ENCODE measurements at regions of chr1 and their contacts with region 1.

Region 1: GRCh38 chr1:39189592-39190041 is 14.9 kb upstream of the MACF1 start:
- DNase-seq: no peak
- H3K4me3 Mint-ChIP-seq: no peak overlapping the region
- H3K27ac Mint-ChIP-seq: peak overlapping the region; percentile 50
- H3K4me1 Mint-ChIP-seq: peaks cover 84% of the 10 kb centered on the region
- H3K27me3 Mint-ChIP-seq: no peaks in the 10 kb centered on the region

Region 2: DNA sequence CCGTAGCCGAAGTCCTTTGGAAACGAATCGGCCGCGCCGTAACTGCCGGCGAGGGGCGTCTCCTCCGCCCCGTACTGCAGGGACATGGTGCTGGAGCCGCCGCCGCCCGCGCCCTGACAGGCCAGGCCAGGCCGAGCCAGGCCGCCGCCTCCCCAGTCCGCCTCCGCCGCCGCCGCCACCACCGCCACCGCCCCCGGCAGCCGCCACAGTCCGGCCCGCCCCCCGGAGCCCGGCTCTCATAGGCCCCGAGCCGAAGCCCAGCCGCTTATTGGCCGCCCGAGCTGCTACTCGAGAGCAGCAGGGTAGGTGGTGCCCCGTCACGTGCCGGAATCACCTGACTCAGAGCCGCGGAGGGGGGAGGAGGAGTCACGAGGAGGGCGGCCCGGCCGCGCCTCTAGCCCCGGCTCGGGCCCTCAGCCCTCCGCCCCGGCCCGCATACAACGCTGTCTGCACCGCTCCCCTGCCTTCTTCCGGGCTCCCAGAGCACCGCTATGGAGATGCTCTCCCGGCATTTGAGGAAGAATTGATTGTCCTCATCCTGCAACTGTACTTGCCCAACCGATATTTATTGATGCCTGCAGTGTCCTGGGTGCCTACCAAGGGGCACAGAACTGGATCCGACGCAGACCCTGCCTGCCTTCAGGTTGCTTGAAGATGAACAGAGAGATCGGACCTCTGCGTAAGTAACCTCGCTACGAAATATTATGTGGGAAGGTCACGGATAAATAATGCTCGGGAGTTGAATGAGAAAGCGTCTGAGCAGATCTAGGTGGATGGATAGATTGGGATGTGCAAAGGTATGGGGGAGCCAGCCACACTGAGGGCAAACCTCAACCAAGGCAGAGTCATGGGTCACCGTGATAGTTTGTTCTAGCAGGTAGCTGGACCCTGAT is 329.8 kb before region 1 on chr1 and contains the start of gene RRAGC:
- CTCF ChIA-PET with region 1: no interaction called
- POLR2A ChIA-PET with region 1: no interaction called
- intact Hi-C with region 1: loop called (anchors 5 kb)
- DNase-seq: peak; percentile 99
- H3K4me3 Mint-ChIP-seq: peak within 1 kb of the TSS; percentile 99
- H3K27ac Mint-ChIP-seq: peak within 1 kb of the TSS; percentile 95
- H3K4me1 Mint-ChIP-seq: peaks cover 71% of the 10 kb centered on the region
- H3K27me3 Mint-ChIP-seq: no peaks in the 10 kb centered on the region
- total RNA-seq, gene RRAGC: 27.6 to 29.7 TPM

Region 3: GRCh38 chr1:39098546-39099250 is 90.9 kb before region 1 on chr1:
- CTCF ChIA-PET with region 1: interaction called, 58 read pairs
- POLR2A ChIA-PET with region 1: interaction called, 4 read pairs
- intact Hi-C with region 1: loop called (anchors 1 kb)
- DNase-seq: peak; percentile 76
- H3K4me3 Mint-ChIP-seq: no peak overlapping the region
- H3K27ac Mint-ChIP-seq: peak overlapping the region; percentile 46
- H3K4me1 Mint-ChIP-seq: peaks cover 22% of the 10 kb centered on the region
- H3K27me3 Mint-ChIP-seq: no peaks in the 10 kb centered on the region

Region 4: DNA sequence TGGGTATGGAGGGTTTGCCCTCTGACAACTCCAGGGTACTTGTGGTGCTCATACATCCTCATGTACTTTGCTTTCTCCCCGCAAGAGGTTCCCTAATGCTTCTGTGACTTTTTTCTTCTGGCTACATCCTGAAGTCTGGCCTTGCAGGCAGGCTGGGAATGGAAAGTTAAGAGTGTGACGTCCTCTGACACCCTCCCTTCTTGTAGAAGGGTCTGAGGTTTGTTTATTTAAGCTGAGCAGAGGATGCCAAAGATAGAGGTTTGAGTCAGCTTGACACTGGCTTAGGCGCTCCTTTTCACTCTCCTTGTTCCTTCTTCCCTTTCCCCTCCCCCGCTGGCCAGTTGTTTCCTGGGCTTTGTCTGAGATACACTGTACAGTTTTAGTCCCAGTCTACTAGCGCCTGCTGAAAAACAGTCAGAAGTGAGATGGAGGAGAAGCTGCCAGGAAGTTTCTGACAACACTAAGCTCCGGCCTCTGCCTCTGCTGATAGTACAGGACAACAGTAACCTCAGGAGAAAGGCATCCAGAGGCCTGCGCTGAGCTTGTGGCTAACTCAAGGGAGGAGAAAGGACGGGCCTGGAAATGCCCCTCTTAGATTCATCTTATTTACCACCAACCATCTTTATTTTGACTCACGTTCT is 14.9 kb after region 1 on chr1 and contains the start of gene MACF1:
- CTCF ChIA-PET with region 1: interaction called, 151 read pairs
- POLR2A ChIA-PET with region 1: interaction called, 129 read pairs
- intact Hi-C with region 1: loop called (anchors 1 kb)
- DNase-seq: peak; percentile 72
- H3K4me3 Mint-ChIP-seq: peak within 1 kb of the TSS; percentile 81
- H3K27ac Mint-ChIP-seq: peak within 1 kb of the TSS; percentile 96
- H3K4me1 Mint-ChIP-seq: peaks cover 48% of the 10 kb centered on the region
- H3K27me3 Mint-ChIP-seq: no peaks in the 10 kb centered on the region
- total RNA-seq, gene MACF1: 239 to 240 TPM

Region 5: DNA sequence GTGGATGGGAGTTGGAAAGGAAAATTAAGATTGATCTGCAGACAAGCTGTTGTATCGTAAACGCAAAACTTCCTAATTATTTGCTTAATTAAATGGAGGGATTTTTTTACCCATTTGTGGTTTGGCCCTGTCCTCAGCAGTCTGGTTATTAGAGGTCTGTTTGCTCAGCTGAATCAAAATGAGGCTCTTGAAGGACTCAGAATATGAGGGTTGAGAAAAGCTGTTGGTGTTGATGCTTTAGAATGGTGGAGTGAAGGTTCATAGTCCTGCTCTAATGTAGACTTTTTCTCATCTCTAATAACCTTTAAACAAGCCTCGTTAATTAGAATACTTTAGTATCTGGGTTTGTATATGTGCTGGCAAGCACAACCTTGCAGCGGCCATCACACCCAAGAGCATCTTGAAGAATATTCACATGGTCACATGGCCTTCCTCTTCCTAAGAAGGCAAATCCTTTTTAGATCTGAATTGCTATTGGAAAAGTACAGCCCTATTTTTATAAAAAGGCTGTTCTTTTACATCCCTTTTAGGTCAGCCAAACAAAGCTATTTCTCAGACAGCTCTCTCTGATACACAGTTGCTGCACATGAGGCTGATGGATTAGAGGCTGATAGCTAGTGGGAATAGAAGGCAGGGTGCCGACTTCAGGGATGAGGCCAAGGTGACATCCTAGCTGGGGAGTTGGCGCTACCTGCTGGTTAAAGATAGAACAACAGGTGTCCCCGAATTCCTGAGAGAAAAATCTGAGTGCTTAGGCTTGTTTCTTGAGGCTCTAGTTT is 68.7 kb after region 1 on chr1:
- CTCF ChIA-PET with region 1: interaction called, 320 read pairs
- POLR2A ChIA-PET with region 1: interaction called, 17 read pairs
- intact Hi-C with region 1: loop called (anchors 1 kb)
- DNase-seq: peak; percentile 74
- H3K4me3 Mint-ChIP-seq: no peak overlapping the region
- H3K27ac Mint-ChIP-seq: peak overlapping the region; percentile 56
- H3K4me1 Mint-ChIP-seq: peaks cover 44% of the 10 kb centered on the region
- H3K27me3 Mint-ChIP-seq: no peaks in the 10 kb centered on the region